ENCODE measurements at regions of chr17 and their contacts with region 1.

Region 1: DNA sequence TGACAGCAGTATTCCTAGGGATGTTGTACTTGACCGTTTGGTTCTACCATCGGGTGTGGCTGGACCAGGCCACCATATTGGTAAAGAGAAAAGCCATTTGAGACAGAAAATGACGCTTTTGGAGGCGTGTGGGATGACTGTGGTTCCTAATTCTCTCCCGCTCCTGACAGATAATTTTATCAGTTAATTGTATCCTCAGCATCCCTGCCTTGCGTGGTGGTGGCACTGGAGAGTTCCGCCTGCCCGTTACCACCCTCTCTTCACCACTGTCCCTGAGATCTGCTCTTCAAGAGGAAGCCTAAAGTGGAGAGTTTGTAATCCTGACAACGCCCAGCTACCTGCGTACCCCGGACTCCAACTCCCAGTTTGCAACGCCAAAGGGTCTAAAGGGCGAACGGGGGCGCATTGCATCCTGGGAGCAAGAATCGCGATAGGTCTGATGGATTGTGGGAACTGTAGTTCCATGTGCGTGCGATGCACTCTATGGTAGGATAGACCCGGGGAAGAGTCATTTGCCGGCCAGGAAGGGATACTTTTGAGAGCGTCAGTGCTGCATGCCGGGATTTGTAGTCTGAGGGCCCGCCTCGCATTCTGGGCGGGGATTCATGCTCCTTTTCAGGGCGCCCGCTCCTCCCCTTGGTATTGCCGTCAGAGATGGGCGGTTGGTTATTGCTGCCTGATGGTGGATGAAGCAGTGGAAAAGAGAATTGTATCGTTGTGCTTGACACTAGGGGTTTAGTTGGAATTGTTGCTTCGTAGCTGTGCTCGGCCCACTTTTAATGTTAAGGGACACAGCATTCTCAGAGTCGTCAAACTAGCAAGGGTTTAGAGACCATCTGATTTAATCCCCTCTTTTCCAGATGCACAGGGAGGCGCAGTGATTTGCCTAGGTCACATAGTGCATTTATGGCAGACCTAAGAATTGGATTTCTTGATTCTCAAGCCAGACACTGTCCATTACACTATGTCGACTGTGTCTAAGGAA is 965 bp upstream of the PHF12 start:
- DNase-seq: peak; percentile 96
- ATAC-seq: peak; percentile 77
- H3K4me3 Mint-ChIP-seq: no peak overlapping the region
- H3K27ac Mint-ChIP-seq: no peak overlapping the region
- H3K4me1 Mint-ChIP-seq: peaks cover 15% of the 10 kb centered on the region
- H3K27me3 Mint-ChIP-seq: no peaks in the 10 kb centered on the region

Region 2: GRCh38 chr17:28371245-28372202 is 580.8 kb before region 1 on chr17 and contains the start of gene SARM1:
- CTCF ChIA-PET with region 1: no interaction called
- POLR2A ChIA-PET with region 1: no interaction called
- intact Hi-C with region 1: loop called in 1 of 2 experiments (anchors 2 kb)
- DNase-seq: peak; percentile 95
- ATAC-seq: peak; percentile 95
- H3K4me3 Mint-ChIP-seq: peak within 1 kb of the TSS; percentile 76
- H3K27ac Mint-ChIP-seq: peak within 1 kb of the TSS; percentile 86
- H3K4me1 Mint-ChIP-seq: peaks cover 22% of the 10 kb centered on the region
- H3K27me3 Mint-ChIP-seq: no peaks in the 10 kb centered on the region
- total RNA-seq, gene SARM1: 18.1 to 21.9 TPM

Region 3: DNA sequence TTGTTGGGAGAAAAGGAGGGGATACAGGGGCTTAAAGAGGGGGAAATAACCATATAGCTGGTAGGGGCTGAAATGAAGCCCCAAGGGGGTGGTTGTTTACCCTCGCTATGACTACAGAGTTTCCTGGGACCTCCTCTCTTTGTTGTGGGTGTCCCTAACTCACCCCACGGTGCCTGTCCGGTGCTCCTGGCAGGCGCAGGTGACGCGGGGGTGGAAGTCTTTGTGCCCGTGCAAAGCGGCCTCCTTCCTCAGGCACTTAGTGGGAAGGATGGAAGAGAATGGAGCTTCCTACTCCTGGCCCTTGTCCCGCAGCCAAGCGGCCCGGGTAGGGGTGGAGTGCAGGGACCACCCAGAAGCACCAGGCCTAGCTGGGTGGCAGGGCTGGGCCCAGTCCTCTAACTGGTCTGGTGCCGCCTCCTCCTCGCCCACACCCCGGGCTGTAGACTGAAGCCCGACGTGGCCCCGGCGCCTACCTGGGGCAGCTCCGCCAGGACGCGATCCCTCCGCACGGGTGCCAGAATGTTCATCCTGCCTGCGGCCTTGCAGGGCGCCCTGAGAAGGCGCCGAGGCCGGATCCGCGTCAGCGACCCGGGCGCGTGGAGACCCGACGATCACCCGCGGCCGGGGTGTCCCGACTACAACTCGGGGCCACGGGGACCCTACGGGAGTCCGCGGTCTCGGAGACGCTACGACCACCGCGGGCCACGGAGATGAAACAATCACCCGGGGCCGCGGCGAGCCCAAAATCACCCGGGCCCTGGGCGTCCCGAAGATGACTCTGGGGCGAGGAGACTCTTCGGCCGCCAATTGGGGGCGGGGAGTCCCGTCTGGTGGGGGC is 235.3 kb before region 1 on chr17:
- CTCF ChIA-PET with region 1: interaction called, 23 read pairs
- POLR2A ChIA-PET with region 1: interaction called, 19 read pairs
- intact Hi-C with region 1: loop called (anchors 1 kb)
- DNase-seq: peak; percentile 29
- ATAC-seq: no peak
- H3K4me3 Mint-ChIP-seq: peak overlapping the region; percentile 57
- H3K27ac Mint-ChIP-seq: no peak overlapping the region
- H3K4me1 Mint-ChIP-seq: peaks cover 30% of the 10 kb centered on the region
- H3K27me3 Mint-ChIP-seq: peaks cover 19% of the 10 kb centered on the region

Region 4: GRCh38 chr17:28842282-28843012 is 109.8 kb before region 1 on chr17 and contains the start of gene FAM222B:
- CTCF ChIA-PET with region 1: interaction called, 3 read pairs
- POLR2A ChIA-PET with region 1: no interaction called
- intact Hi-C with region 1: loop called (anchors 1 to 2 kb)
- DNase-seq: peak; percentile 93
- ATAC-seq: peak; percentile 99
- H3K4me3 Mint-ChIP-seq: peak within 1 kb of the TSS; percentile 93
- H3K27ac Mint-ChIP-seq: peak within 1 kb of the TSS; percentile 90
- H3K4me1 Mint-ChIP-seq: peaks cover 20% of the 10 kb centered on the region
- H3K27me3 Mint-ChIP-seq: no peaks in the 10 kb centered on the region
- total RNA-seq, gene FAM222B: 16.8 to 20.8 TPM

Region 5: GRCh38 chr17:28967221-28968140 is 15.2 kb after region 1 on chr17:
- CTCF ChIA-PET with region 1: interaction called, 22 read pairs
- POLR2A ChIA-PET with region 1: no interaction called
- intact Hi-C with region 1: no loop called
- DNase-seq: no peak
- ATAC-seq: no peak
- H3K4me3 Mint-ChIP-seq: no peak overlapping the region
- H3K27ac Mint-ChIP-seq: no peak overlapping the region
- H3K4me1 Mint-ChIP-seq: no peaks in the 10 kb centered on the region
- H3K27me3 Mint-ChIP-seq: peaks cover 6% of the 10 kb centered on the region

Region 6: DNA sequence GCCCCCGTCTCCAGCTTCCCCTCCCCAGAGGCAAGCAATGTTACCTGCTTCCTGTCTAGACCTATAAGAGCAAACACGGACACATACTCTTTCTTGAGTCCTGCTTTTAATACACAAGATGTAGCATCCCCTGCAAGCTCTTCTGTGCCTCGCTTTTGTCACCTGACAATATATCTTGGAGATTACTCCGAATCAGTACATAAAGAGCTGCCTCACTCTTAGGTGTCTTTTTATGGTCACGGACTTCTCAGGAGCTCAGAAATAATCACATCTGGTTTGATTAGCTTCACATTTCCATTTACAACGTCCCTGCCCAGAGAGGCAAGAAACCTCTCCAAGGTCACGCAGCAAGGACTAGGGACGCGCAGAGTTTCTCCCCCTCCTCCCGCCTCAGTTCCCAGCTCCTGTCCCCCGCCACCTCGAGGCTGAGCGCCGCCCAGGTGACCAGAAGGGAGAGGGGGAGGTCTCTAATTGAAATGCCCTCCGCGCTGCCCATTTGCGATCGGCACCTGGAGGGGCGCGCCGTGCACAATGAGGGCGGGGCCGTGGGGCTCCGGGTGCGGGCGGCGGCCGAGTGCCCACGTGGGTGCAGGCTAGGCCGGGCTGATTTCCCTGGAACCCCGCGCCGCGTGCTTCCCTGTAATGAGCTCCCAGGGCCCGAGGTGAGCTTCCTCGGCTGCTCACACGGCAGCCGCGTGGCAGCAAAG is 67.3 kb after region 1 on chr17:
- CTCF ChIA-PET with region 1: no interaction called
- POLR2A ChIA-PET with region 1: no interaction called
- intact Hi-C with region 1: no loop called
- DNase-seq: no peak
- ATAC-seq: no peak
- H3K4me3 Mint-ChIP-seq: no peak overlapping the region
- H3K27ac Mint-ChIP-seq: no peak overlapping the region
- H3K4me1 Mint-ChIP-seq: peaks cover 2% of the 10 kb centered on the region
- H3K27me3 Mint-ChIP-seq: peaks cover 34% of the 10 kb centered on the region

Region 7: DNA sequence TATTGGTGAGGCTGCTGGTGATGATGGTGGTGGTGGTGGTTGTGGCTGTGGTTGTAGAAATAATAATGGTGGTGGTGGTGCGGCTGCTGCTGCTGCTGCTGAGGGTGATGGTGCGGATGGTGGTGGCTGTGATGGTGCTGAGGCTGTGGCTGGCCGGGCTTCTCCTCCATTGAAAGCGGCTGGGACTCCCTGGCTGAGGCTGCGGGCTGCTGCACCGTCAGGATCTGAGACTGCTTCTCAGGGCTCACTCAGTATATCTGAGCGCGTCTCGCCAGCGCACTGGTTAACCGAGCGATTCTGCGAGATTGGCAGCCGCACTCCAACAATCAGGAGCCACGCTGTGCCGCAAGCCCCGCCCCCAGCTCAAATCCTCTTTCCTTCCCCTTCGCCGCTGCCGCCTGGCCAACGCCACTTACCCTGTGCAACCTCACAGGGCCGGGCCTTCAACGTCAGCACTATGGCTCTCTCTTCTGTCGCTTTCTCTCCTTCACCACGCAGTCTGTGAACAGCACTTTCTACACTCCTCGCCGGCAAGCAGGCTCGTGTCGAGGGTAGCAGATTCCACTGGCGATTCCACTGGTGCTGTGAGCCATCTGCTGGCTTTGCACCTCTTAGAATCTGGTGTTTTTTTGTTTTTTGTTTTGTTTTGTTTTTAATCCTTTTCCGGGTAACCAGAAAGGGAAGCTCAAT is 341.8 kb after region 1 on chr17 and contains the start of gene NUFIP2:
- CTCF ChIA-PET with region 1: no interaction called
- POLR2A ChIA-PET with region 1: interaction called, 3 read pairs
- intact Hi-C with region 1: loop called (anchors 1 to 5 kb)
- DNase-seq: peak; percentile 99
- ATAC-seq: peak; percentile 93
- H3K4me3 Mint-ChIP-seq: peak within 1 kb of the TSS; percentile 100
- H3K27ac Mint-ChIP-seq: peak within 1 kb of the TSS; percentile 99
- H3K4me1 Mint-ChIP-seq: peaks cover 27% of the 10 kb centered on the region
- H3K27me3 Mint-ChIP-seq: no peaks in the 10 kb centered on the region
- total RNA-seq, gene NUFIP2: 55.1 to 93.1 TPM